Stomach (tissue), 19 donors: ENCODE measurements at regions of chr18 and their contacts with region 1.

Region 1: DNA sequence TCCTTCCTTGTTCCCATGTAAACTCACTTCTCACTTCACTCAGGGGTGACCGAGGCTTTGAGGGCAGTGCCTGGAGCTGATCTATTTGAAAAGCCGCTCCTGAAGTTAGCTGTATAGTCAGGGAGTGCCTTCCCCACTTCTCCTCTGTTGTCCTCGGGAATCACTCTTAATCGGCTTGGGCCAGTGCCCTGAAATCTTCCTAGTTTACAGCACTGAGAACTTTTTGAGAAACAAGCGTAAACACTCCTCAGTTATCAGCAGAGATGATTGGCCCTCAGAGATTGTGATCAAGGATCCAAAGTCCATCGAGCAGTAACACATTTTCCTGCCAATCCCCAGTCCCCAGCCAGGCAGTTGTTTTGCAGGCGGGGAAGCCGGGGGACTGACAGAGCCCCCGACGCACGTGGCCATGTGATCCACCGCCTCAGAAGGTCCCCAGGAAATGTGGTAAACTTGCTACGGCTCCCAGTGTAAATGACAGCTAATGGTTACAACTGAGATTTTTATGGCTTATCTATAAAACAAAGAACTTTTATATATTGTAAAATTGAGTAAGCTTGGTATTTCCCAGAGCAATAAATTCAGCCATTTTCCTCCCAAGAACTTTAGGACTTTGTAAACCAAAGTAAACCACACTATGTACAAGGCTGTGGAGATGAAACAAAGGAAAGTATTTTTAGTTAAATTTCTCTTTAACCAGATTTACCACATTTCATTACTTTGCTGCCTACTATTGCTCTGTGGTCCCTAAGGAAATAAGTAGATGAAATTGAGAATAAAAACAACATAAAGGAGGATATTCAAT is 53.5 kb downstream of the C18orf63 start:
- DNase-seq: peak in 1 of 2 donors; percentile 68
- H3K4me3 ChIP-seq: peak overlapping the region in 3 of 4 donors; percentile 3 to 30 (median 7)
- H3K27ac ChIP-seq: no peak overlapping the region
- H3K4me1 ChIP-seq: peaks cover 0 to 6% (median 0%) of the 10 kb centered on the region in 4 donors
- H3K27me3 ChIP-seq: no peaks in the 10 kb centered on the region
- CTCF ChIP-seq: no peak
- EP300 ChIP-seq: no peak
- POLR2A ChIP-seq: no peak

Region 2: GRCh38 chr18:74264303-74265020 is 104.6 kb before region 1 on chr18:
- intact Hi-C with region 1: no loop called
- DNase-seq: no peak
- H3K4me3 ChIP-seq: no peak overlapping the region
- H3K27ac ChIP-seq: no peak overlapping the region
- H3K4me1 ChIP-seq: peaks cover 0 to 19% (median 4%) of the 10 kb centered on the region in 4 donors
- H3K27me3 ChIP-seq: no peaks in the 10 kb centered on the region
- CTCF ChIP-seq: no peak
- EP300 ChIP-seq: no peak
- POLR2A ChIP-seq: no peak

Region 3: DNA sequence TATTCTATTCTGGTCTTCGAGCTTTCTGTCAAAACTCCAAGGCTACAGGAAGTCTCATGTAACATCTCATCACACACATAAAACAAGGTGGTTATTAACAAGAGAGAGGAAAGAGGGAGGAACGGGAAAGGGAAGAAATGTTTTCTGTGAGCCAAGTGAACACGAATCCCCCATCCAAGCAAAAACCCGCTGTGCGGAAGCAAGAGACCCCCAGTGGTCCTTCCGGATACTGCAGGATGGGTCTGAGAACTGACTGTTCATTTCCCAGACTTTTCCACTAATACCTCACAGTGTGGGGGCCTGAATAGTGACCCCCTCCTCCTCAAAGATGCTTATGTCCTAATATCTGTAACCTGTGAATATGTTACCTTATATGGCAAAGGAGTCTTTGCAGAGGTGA is 107.0 kb after region 1 on chr18:
- intact Hi-C with region 1: loop called (anchors 10 kb)
- DNase-seq: peak in 1 of 2 donors; percentile 70
- H3K4me3 ChIP-seq: no peak overlapping the region
- H3K27ac ChIP-seq: no peak overlapping the region
- H3K4me1 ChIP-seq: peaks cover 4 to 33% (median 12%) of the 10 kb centered on the region in 4 donors
- H3K27me3 ChIP-seq: peaks cover 0 to 3% (median 0%) of the 10 kb centered on the region in 3 donors
- CTCF ChIP-seq: peak in 1 of 7 experiments; percentile 18
- EP300 ChIP-seq: no peak
- POLR2A ChIP-seq: no peak